A673 (cell line): ENCODE measurements at regions of chr2 and their contacts with region 1.

Region 1: GRCh38 chr2:39379643-39380524 is 57.2 kb downstream of the MAP4K3 start:
- DNase-seq: peak; percentile 63
- H3K4me3 ChIP-seq: no peak overlapping the region
- H3K27ac ChIP-seq: no peak overlapping the region
- H3K4me1 ChIP-seq: peaks cover 17% of the 10 kb centered on the region
- H3K27me3 ChIP-seq: no peaks in the 10 kb centered on the region
- CTCF ChIP-seq: peak; percentile 72

Region 2: GRCh38 chr2:38634684-38635083 is 745.2 kb before region 1 on chr2:
- CTCF ChIA-PET with region 1: no interaction called
- POLR2A ChIA-PET with region 1: no interaction called
- intact Hi-C with region 1: no loop called
- DNase-seq: no peak
- H3K4me3 ChIP-seq: no peak overlapping the region
- H3K27ac ChIP-seq: no peak overlapping the region
- H3K4me1 ChIP-seq: no peaks in the 10 kb centered on the region
- H3K27me3 ChIP-seq: no peaks in the 10 kb centered on the region
- CTCF ChIP-seq: no peak

Region 3: GRCh38 chr2:39283561-39283960 is 96.3 kb before region 1 on chr2:
- CTCF ChIA-PET with region 1: no interaction called
- POLR2A ChIA-PET with region 1: no interaction called
- intact Hi-C with region 1: no loop called
- DNase-seq: peak; percentile 43
- H3K4me3 ChIP-seq: no peak overlapping the region
- H3K27ac ChIP-seq: no peak overlapping the region
- H3K4me1 ChIP-seq: no peaks in the 10 kb centered on the region
- H3K27me3 ChIP-seq: no peaks in the 10 kb centered on the region
- CTCF ChIP-seq: no peak

Region 4: GRCh38 chr2:39728941-39729351 is 349.1 kb after region 1 on chr2:
- CTCF ChIA-PET with region 1: interaction called, 6 read pairs
- POLR2A ChIA-PET with region 1: no interaction called
- intact Hi-C with region 1: loop called (anchors 5 kb)
- DNase-seq: peak; percentile 65
- H3K4me3 ChIP-seq: no peak overlapping the region
- H3K27ac ChIP-seq: no peak overlapping the region
- H3K4me1 ChIP-seq: peaks cover 27% of the 10 kb centered on the region
- H3K27me3 ChIP-seq: no peaks in the 10 kb centered on the region
- CTCF ChIP-seq: peak; percentile 95